ENCODE measurements at regions of chr1 and their contacts with region 1.

Region 1: DNA sequence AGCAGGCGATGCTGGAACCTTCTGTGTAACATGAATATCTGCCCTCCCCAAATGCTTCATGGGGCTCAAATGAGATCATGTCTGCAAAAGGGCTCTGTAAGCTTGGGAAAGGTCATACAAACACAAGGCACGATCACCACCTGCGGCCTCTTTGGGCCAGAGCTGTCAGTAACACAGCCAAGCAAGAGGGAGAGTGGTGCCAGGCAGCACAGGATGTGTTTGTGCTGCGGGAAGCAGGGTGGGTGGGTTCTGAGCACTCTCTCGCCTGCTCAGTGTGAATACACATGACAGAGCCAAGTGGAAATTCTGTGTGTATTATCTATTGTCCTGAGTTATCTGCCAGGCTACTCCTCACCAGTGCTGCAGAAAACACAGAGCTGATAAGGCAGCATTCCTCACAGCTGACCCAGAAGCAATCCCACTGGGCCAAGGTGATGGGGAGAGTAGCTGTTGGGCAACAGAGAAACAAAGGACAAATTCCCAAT is 101.2 kb downstream of the LAMC2 start:
- DNase-seq: peak; percentile 87

Region 2: DNA sequence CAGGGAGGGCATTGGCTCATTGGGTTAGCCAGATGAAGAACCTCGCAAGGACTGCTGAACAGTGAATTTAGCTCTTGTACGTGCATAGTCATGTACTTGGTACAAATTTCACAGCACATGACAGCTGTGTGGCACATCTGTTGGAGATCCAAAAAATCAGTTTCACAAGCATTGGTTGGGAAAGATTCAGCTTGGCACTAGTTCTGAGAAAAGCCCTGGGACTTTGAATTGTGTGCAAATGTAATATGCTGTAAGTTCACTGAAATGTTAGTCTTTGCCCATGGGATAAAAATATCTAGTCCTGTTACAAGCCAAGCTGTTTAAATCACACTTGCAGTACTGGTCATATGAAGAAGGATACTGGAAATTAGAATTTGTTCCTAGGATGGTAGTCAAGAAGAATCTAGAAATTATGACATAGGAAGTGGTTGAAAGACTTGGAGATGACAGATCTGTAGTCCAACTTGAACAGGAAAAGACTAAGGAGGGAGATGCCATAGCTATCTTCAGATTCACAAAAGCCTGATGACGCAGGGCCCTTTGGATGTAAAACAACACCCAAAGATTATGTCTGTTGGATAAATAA is 81.9 kb before region 1 on chr1:
- intact Hi-C with region 1: no loop called
- DNase-seq: no peak

Region 3: GRCh38 chr1:183301239-183301638 is 14.0 kb after region 1 on chr1:
- intact Hi-C with region 1: loop called (anchors 2 kb)
- DNase-seq: no peak

Region 4: DNA sequence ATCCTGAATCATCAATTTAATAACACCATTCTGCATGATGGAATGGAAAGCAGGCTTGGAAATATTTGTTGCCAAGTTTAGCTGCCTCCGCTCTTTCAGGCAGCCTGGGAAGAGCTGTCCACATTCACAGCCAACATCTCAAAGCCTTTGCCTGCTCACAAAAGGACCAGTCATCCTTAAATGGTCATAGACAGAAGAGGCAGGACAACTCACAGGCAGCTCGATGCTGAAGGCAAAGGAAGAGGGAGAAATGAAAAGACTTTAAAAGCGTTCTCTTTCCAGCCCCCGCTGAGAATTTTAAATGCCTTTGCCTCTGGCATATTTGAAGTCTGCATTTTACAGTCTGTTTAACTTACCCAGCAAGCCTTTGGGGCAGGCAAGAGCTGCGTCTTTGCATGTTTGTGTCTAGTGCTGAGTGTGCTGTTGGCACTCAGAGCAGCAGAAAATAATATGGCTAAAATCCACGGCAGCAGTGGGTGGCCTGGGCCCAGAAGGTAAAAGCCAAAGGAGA is 62.0 kb after region 1 on chr1:
- intact Hi-C with region 1: no loop called
- DNase-seq: no peak

Region 5: GRCh38 chr1:183432548-183432875 is 145.3 kb after region 1 on chr1:
- intact Hi-C with region 1: loop called (anchors 2 kb)
- DNase-seq: no peak

Region 6: GRCh38 chr1:183493548-183494246 is 206.5 kb after region 1 on chr1:
- intact Hi-C with region 1: no loop called
- DNase-seq: no peak

Measured in cardiac septum (tissue), 1 donor.